WTC11 (cell line): ENCODE measurements at regions of chr10 and their contacts with region 1.

Region 1: DNA sequence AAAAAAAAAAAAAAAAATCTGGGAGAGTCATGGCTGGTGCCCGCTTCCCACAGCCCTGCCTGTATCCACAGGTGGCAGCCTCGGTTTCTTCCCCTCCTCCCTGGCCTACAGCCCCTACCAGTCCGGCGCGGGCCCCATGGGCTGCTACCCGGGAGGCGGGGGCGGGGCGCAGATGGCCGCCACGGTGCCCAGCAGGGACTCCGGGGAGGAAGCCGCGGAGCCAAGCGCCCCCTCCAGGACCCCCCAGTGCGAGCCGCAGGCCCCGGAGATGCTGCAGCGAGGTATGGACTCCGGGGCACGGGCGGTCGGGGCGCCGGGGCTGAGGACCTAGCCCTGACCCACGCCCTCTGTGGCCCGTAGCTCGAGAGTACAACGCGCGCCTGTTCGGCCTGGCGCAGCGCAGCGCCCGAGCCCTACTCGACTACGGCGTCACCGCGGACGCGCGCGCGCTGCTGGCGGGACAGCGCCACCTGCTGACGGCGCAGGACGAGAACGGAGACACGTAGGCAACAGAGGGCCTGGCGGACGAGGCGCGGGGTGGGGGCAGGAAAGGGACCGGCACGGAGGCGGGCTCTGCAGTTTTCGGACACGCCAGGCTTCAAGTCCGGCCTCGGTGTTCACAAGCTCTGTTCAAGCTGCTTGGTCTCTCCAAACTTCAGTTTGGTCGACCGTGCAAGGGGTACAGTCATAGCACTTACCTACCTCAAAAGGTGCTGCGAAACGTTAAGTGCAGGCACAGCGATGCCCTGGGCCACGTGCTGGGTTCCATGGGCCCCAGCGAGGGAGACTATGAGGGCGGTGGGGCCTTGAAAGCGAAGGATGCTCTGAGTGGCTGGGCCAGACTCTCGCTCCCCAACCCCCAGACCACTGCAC is 3.9 kb downstream of the NFKB2 start:
- DNase-seq: peak; percentile 91
- ATAC-seq: peak; percentile 67
- H3K4me3 Mint-ChIP-seq: peak overlapping the region; percentile 58
- H3K27ac Mint-ChIP-seq: no peak overlapping the region
- H3K4me1 Mint-ChIP-seq: peaks cover 13% of the 10 kb centered on the region
- H3K27me3 Mint-ChIP-seq: peaks cover 23% of the 10 kb centered on the region
- CTCF ChIP-seq: peak; percentile 92

Region 2: DNA sequence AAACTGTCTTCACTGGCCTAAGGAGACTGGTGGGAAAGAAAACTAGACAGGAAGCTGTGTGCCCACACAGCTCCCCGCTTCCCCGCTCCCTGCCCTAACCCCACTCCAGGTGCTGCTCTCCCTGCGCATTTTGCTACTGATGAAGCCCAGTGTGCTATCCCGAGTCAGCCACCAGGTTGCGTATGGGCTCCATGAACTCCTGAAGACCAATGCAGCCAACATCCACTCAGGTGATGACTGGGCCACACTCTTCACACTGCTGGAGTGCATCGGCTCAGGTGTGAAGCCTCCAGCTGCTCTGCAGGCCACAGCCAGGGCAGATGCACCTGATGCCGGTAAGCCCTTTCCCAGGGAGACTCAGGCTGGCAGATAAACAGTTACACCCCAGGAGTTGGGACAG is 24.2 kb before region 1 on chr10:
- CTCF ChIA-PET with region 1: interaction called, 15 read pairs
- POLR2A ChIA-PET with region 1: no interaction called
- DNase-seq: peak; percentile 36
- ATAC-seq: peak; percentile 90
- H3K4me3 Mint-ChIP-seq: no peak overlapping the region
- H3K27ac Mint-ChIP-seq: no peak overlapping the region
- H3K4me1 Mint-ChIP-seq: no peaks in the 10 kb centered on the region
- H3K27me3 Mint-ChIP-seq: no peaks in the 10 kb centered on the region
- CTCF ChIP-seq: no peak

Region 3: GRCh38 chr10:102432162-102432950 is 32.9 kb after region 1 on chr10 and contains the start of gene CUEDC2:
- CTCF ChIA-PET with region 1: interaction called, 13 read pairs
- POLR2A ChIA-PET with region 1: interaction called, 4 read pairs
- DNase-seq: peak; percentile 99
- ATAC-seq: peak; percentile 90
- H3K4me3 Mint-ChIP-seq: peak within 1 kb of the TSS; percentile 95
- H3K27ac Mint-ChIP-seq: peak within 1 kb of the TSS; percentile 57
- H3K4me1 Mint-ChIP-seq: peaks cover 18% of the 10 kb centered on the region
- H3K27me3 Mint-ChIP-seq: peaks cover 57% of the 10 kb centered on the region
- CTCF ChIP-seq: no peak
- total RNA-seq, gene CUEDC2: 40.2 to 69.0 TPM (median 65.8 TPM) in 3 replicates

Region 4: GRCh38 chr10:102461187-102462054 is 62.0 kb after region 1 on chr10:
- CTCF ChIA-PET with region 1: interaction called, 12 read pairs
- POLR2A ChIA-PET with region 1: interaction called, 3 read pairs
- DNase-seq: peak; percentile 98
- ATAC-seq: peak; percentile 84
- H3K4me3 Mint-ChIP-seq: peak overlapping the region; percentile 97
- H3K27ac Mint-ChIP-seq: peak overlapping the region; percentile 90
- H3K4me1 Mint-ChIP-seq: peaks cover 35% of the 10 kb centered on the region
- H3K27me3 Mint-ChIP-seq: peaks cover 2% of the 10 kb centered on the region; the same call in 1 of the 2 replicates
- CTCF ChIP-seq: no peak

Region 5: DNA sequence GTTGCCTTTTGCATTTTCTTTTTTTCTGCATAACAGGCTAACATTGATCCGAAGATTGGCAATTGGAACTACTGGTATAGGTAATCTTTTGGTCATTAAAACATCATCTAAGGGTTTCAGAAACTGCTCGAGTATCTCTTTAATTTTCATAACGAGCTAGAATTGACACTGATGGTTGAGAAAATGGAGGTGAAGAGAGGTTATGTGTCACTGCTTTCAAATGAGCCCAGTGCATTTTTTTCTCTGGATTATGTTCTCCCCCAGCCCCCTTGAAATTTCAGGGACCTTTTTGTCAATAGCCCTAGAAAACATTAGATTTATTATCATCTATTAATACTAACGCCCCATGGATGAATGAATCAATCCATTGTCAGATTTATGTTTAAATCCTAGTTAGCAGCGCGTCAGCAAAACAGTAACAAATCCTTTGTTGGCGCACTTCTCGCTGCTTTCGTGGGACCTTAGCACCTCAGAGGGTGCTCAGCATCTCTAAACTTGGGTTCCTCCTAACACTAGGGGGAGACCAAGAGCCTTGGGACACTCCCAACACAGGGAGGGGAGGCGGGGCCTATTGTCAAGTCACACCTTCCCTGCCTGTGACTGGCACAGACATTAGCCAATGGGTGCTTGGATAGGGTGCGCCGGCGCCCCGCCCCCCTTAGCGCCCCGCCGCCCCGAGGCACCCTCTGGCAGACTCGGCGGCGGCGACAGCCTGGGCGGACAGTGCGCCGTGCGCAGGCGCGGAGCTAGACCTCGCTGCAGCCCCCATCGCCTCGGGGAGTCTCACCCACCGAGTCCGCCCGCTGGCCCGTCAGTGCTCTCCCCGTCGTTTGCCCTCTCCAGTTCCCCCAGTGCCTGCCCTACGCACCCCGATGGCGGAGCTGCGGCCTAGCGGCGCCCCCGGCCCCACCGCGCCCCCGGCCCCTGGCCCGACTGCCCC is 104.1 kb after region 1 on chr10 and contains the start of gene SUFU:
- CTCF ChIA-PET with region 1: interaction called, 11 read pairs
- POLR2A ChIA-PET with region 1: no interaction called
- DNase-seq: peak; percentile 98
- ATAC-seq: peak; percentile 74
- H3K4me3 Mint-ChIP-seq: peak within 1 kb of the TSS; percentile 95
- H3K27ac Mint-ChIP-seq: peak within 1 kb of the TSS; percentile 41; the same call in 1 of the 2 replicates
- H3K4me1 Mint-ChIP-seq: peaks cover 8% of the 10 kb centered on the region; the same call in 1 of the 2 replicates
- H3K27me3 Mint-ChIP-seq: peaks cover 12% of the 10 kb centered on the region
- CTCF ChIP-seq: peak; percentile 70
- total RNA-seq, gene SUFU: 11.6 to 13.1 TPM (median 12.8 TPM) in 3 replicates